B cell (primary cell): ENCODE measurements at regions of chr4 and their contacts with region 1.

Region 1: GRCh38 chr4:15749001-15749400 is 29.1 kb upstream of the CD38 start:
- DNase-seq: no peak
- ATAC-seq: no peak
- H3K4me3 ChIP-seq: no peak overlapping the region
- H3K4me3 Mint-ChIP-seq: no peak overlapping the region
- H3K27ac ChIP-seq: no peak overlapping the region
- H3K27ac Mint-ChIP-seq: no peak overlapping the region
- H3K4me1 ChIP-seq: no peaks in the 10 kb centered on the region
- H3K4me1 Mint-ChIP-seq: peaks cover 5% of the 10 kb centered on the region
- H3K27me3 ChIP-seq: no peaks in the 10 kb centered on the region
- H3K27me3 Mint-ChIP-seq: no peaks in the 10 kb centered on the region
- CTCF ChIP-seq: no peak

Region 2: GRCh38 chr4:15725608-15726007 is 23.4 kb before region 1 on chr4:
- CTCF ChIA-PET with region 1: no interaction called
- POLR2A ChIA-PET with region 1: no interaction called
- intact Hi-C with region 1: no loop called
- DNase-seq: no peak
- ATAC-seq: no peak
- H3K4me3 ChIP-seq: no peak overlapping the region
- H3K4me3 Mint-ChIP-seq: no peak overlapping the region
- H3K27ac ChIP-seq: no peak overlapping the region
- H3K27ac Mint-ChIP-seq: no peak overlapping the region
- H3K4me1 ChIP-seq: no peaks in the 10 kb centered on the region
- H3K4me1 Mint-ChIP-seq: no peaks in the 10 kb centered on the region
- H3K27me3 ChIP-seq: no peaks in the 10 kb centered on the region
- H3K27me3 Mint-ChIP-seq: peaks cover 3% of the 10 kb centered on the region
- CTCF ChIP-seq: no peak

Region 3: GRCh38 chr4:15784959-15785634 is 36.1 kb after region 1 on chr4:
- CTCF ChIA-PET with region 1: no interaction called
- POLR2A ChIA-PET with region 1: no interaction called
- intact Hi-C with region 1: loop called (anchors 5 kb)
- DNase-seq: peak; percentile 86
- ATAC-seq: peak; percentile 88
- H3K4me3 ChIP-seq: no peak overlapping the region
- H3K4me3 Mint-ChIP-seq: peak overlapping the region; percentile 66
- H3K27ac ChIP-seq: peak overlapping the region; percentile 20 to 21
- H3K27ac Mint-ChIP-seq: peak overlapping the region; percentile 87
- H3K4me1 ChIP-seq: peaks cover 48 to 53% of the 10 kb centered on the region in 2 donors
- H3K4me1 Mint-ChIP-seq: peaks cover 58% of the 10 kb centered on the region
- H3K27me3 ChIP-seq: no peaks in the 10 kb centered on the region
- H3K27me3 Mint-ChIP-seq: no peaks in the 10 kb centered on the region
- CTCF ChIP-seq: no peak

Region 4: DNA sequence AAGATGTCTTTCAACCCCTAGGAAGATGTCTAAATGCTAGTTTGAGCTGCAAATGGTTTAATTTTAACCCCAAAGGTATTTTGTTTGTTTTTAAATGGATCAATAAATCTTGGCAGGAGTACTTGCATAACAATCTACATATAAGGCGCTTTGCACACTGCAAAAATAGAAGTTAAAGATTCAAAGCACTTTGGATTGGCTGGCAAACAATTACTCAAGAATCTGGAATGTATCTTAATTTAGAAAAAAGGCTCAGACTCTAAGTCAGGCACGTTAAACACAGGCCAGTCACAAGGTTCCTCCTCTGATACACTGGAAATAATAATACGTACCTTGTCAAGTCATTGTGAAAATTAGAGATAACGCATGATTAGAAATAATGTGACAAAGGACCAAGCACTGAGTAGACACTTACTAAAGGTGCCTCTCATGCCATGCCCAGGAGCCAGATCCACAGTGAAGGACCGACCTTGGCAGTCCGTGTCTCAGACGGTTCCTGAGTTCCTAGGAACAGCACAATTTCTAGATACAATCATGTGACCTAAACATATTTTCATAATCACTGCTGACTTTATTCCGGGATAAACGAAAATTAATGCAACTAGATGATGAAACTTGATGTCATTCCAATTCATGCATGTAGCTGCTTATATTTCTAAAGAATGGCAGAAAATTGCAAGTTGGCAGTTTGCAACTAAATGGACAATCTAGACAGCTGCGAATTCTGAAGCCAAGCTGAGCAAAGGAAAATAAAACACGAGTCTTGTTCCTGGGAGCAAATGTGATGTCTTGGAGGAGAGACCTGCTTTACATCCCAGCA is 285.2 kb after region 1 on chr4:
- CTCF ChIA-PET with region 1: no interaction called
- POLR2A ChIA-PET with region 1: no interaction called
- intact Hi-C with region 1: no loop called
- DNase-seq: no peak
- ATAC-seq: no peak
- H3K4me3 ChIP-seq: no peak overlapping the region
- H3K4me3 Mint-ChIP-seq: no peak overlapping the region
- H3K27ac ChIP-seq: no peak overlapping the region
- H3K27ac Mint-ChIP-seq: no peak overlapping the region
- H3K4me1 ChIP-seq: peaks cover 8 to 10% of the 10 kb centered on the region in 2 donors
- H3K4me1 Mint-ChIP-seq: peaks cover 3% of the 10 kb centered on the region
- H3K27me3 ChIP-seq: peaks cover 0 to 2% (median 0%) of the 10 kb centered on the region in 4 experiments
- H3K27me3 Mint-ChIP-seq: no peaks in the 10 kb centered on the region
- CTCF ChIP-seq: no peak